ENCODE measurements at regions of chr5 and their contacts with region 1.

Region 1: GRCh38 chr5:139262742-139263445 is 30.6 kb upstream of the MATR3 start:
- DNase-seq: peak; percentile 91
- ATAC-seq: peak; percentile 100
- H3K4me3 ChIP-seq: no peak overlapping the region
- H3K27ac ChIP-seq: no peak overlapping the region
- H3K4me1 ChIP-seq: no peaks in the 10 kb centered on the region
- H3K27me3 ChIP-seq: peaks cover 6% of the 10 kb centered on the region; the same call in 1 of the 2 replicates
- CTCF ChIP-seq: peak; percentile 98
- POLR2A ChIP-seq: 0 out of 2 replicates have a peak, but pooled peaks have one; percentile 47
- RAD21 ChIP-seq: peak; percentile 100

Region 2: GRCh38 chr5:138575194-138576015 is 687.5 kb before region 1 on chr5 and contains the start of gene HSPA9:
- CTCF ChIA-PET with region 1: no interaction called
- POLR2A ChIA-PET with region 1: interaction called, 3 read pairs
- dilution Hi-C with region 1: no loop called
- in situ Hi-C with region 1: loop called (anchors 10 kb)
- intact Hi-C with region 1: loop called (anchors 1 kb)
- DNase-seq: peak; percentile 100
- ATAC-seq: peak; percentile 91
- H3K4me3 ChIP-seq: peak within 1 kb of the TSS; percentile 76
- H3K27ac ChIP-seq: peak within 1 kb of the TSS; percentile 98
- H3K4me1 ChIP-seq: no peaks in the 10 kb centered on the region
- H3K27me3 ChIP-seq: no peaks in the 10 kb centered on the region
- CTCF ChIP-seq: no peak
- POLR2A ChIP-seq: peak; percentile 98
- RAD21 ChIP-seq: 0 out of 2 replicates have a peak, but pooled peaks have one; percentile 6
- total RNA-seq, gene HSPA9: 456 and 472 TPM in 2 replicates

Region 3: GRCh38 chr5:138641547-138642298 is 621.2 kb before region 1 on chr5:
- CTCF ChIA-PET with region 1: interaction called, 3 read pairs
- POLR2A ChIA-PET with region 1: no interaction called
- dilution Hi-C with region 1: no loop called
- in situ Hi-C with region 1: loop called (anchors 10 kb)
- intact Hi-C with region 1: loop called (anchors 1 kb)
- DNase-seq: peak; percentile 60
- ATAC-seq: peak; percentile 88
- H3K4me3 ChIP-seq: no peak overlapping the region
- H3K27ac ChIP-seq: no peak overlapping the region
- H3K4me1 ChIP-seq: no peaks in the 10 kb centered on the region
- H3K27me3 ChIP-seq: peaks cover 45% of the 10 kb centered on the region
- CTCF ChIP-seq: peak; percentile 84
- POLR2A ChIP-seq: no peak
- RAD21 ChIP-seq: peak; percentile 90

Region 4: GRCh38 chr5:138752951-138753793 is 509.7 kb before region 1 on chr5 and contains the start of gene CTNNA1:
- CTCF ChIA-PET with region 1: no interaction called
- POLR2A ChIA-PET with region 1: interaction called, 5 read pairs
- dilution Hi-C with region 1: no loop called
- in situ Hi-C with region 1: no loop called
- intact Hi-C with region 1: loop called (anchors 5 kb)
- DNase-seq: peak; percentile 49
- ATAC-seq: peak; percentile 91
- H3K4me3 ChIP-seq: peak within 1 kb of the TSS; percentile 95
- H3K27ac ChIP-seq: peak within 1 kb of the TSS; percentile 93
- H3K4me1 ChIP-seq: peaks cover 8% of the 10 kb centered on the region
- H3K27me3 ChIP-seq: no peaks in the 10 kb centered on the region
- CTCF ChIP-seq: no peak
- POLR2A ChIP-seq: peak; percentile 92
- RAD21 ChIP-seq: no peak
- total RNA-seq, gene CTNNA1: 395 and 471 TPM in 2 replicates

Region 5: DNA sequence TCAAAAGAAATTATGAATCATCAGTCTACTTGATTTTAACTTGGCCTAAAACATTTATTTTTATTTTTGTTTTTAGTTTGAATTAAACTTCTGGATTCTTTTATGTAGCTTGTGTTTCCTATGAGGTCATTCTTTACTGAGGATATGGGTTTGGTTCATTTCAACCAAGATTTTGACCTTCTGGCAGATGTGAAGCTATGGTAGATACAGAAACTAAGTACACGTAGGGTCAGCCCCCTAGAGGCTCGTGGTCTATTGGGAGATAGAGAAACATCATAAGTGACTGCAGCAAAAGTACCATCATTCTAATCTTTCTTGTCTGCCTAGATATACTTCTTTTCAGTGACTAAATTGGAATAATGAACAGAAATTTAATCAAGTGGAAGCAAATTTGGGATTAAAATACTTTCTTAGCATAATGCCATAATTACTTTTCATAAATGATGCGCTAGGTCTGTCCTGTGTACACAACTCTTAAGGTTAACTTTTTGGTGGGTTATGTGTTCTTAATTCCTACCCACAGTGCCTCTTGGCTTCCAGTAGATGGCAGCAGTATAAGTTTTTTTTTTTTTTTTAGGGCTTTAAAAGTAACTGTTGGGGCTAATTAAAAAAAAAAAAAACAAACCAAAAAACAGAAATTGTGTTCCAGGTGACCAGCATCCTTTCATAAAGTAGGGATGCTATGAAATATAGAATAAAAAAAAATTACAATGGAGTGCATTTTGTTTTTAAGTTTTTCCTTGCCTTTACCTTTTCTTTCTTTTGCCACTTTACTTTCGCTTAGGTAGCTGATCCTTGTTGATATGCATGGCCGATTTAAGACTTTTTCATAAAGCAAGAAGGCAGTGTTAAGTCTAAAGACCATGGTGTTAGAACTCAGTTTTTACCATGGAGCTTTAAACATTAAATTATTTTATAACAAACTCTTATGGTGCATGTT is 437.7 kb before region 1 on chr5:
- CTCF ChIA-PET with region 1: interaction called, 4 read pairs
- POLR2A ChIA-PET with region 1: no interaction called
- dilution Hi-C with region 1: no loop called
- in situ Hi-C with region 1: loop called (anchors 10 kb)
- intact Hi-C with region 1: loop called (anchors 1 kb)
- DNase-seq: peak; percentile 39
- ATAC-seq: peak; percentile 46; the same call in 1 of the 2 replicates
- H3K4me3 ChIP-seq: no peak overlapping the region
- H3K27ac ChIP-seq: no peak overlapping the region
- H3K4me1 ChIP-seq: 0 out of 2 replicates have a peak, but pooled peaks cover 2% of the 10 kb centered on the region
- H3K27me3 ChIP-seq: no peaks in the 10 kb centered on the region
- CTCF ChIP-seq: peak; percentile 52
- POLR2A ChIP-seq: no peak
- RAD21 ChIP-seq: peak; percentile 38

Region 6: DNA sequence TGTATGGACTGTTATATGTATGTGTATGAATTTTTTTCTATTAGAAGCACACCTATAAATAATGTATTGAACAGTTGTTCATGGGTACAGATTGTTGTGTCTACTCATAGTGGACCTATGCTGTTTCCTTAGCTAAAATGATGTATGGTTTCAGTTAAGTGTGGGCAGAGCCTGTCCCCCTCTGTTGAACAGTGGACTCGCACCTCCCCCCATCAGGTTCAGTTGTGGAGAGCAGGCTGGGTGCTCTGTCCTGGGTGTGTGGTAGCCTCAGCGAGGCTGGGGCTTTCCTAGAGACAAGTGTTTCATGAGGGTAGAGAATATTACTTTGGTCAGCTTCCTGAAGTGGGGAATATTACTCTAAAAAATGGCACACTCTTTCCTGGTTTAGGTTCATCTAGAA is 340.4 kb before region 1 on chr5:
- CTCF ChIA-PET with region 1: interaction called, 3 read pairs
- POLR2A ChIA-PET with region 1: no interaction called
- dilution Hi-C with region 1: no loop called
- in situ Hi-C with region 1: no loop called
- intact Hi-C with region 1: loop called (anchors 5 kb)
- DNase-seq: no peak
- ATAC-seq: no peak
- H3K4me3 ChIP-seq: no peak overlapping the region
- H3K27ac ChIP-seq: no peak overlapping the region
- H3K4me1 ChIP-seq: no peaks in the 10 kb centered on the region; the same call in 1 of the 2 replicates
- H3K27me3 ChIP-seq: no peaks in the 10 kb centered on the region
- CTCF ChIP-seq: no peak
- POLR2A ChIP-seq: no peak
- RAD21 ChIP-seq: no peak

Region 7: DNA sequence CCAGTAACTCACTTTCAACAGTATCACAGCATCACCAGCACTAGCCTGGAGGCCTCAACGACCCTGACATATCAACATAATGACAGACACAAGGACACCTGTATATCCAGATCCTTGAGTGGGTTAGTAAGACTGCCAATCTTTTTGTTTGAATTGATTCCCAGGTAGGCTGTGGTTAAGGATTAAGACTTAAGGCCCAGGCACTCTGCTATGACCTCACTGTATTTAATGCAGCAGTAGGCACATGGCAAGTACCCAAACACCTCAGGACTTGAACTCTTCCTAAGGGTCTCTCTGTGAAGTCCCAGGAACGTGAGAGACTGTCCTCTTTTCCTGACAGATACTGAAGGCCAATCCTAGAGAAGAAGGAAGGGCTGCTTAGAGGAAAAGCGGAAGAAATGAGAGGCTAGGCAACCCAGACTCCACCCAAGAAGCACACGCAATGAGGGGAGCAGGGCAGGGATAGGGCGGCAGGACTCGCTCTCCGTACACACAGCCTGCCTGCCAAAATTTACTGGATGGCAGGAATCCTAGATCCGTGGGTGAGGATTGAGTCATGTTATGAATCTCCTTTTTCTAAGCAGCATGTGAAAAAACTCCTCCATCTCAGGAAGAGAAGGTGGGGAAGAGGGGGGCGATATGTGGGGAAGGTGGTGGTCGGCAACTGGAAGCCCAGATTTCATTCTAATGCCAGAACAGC is 158.2 kb before region 1 on chr5:
- CTCF ChIA-PET with region 1: no interaction called
- POLR2A ChIA-PET with region 1: no interaction called
- dilution Hi-C with region 1: no loop called
- in situ Hi-C with region 1: no loop called
- intact Hi-C with region 1: loop called (anchors 10 kb)
- DNase-seq: peak; percentile 90
- ATAC-seq: peak; percentile 90
- H3K4me3 ChIP-seq: no peak overlapping the region
- H3K27ac ChIP-seq: peak overlapping the region; percentile 63; the same call in 1 of the 2 replicates
- H3K4me1 ChIP-seq: peaks cover 17% of the 10 kb centered on the region
- H3K27me3 ChIP-seq: no peaks in the 10 kb centered on the region
- CTCF ChIP-seq: no peak
- POLR2A ChIP-seq: no peak
- RAD21 ChIP-seq: no peak; the same call in 1 of the 2 replicates

Measured in IMR-90 (cell line).